CD14-positive monocyte (primary cell): ENCODE measurements at regions of chr2 and their contacts with region 1.

Region 1: GRCh38 chr2:222805541-222806304 is 55.1 kb upstream of the ACSL3 start:
- DNase-seq: peak; percentile 70 to 87 (median 79)
- H3K4me3 ChIP-seq: peak overlapping the region in 1 of 3 experiments; percentile 41
- H3K4me3 Mint-ChIP-seq: peak overlapping the region in 1 of 2 donors; percentile 67
- H3K27ac ChIP-seq: peak overlapping the region; percentile 73 to 92
- H3K27ac Mint-ChIP-seq: peak overlapping the region; percentile 95 to 99 (median 98)
- H3K4me1 ChIP-seq: peaks cover 24% of the 10 kb centered on the region in 2 donors
- H3K4me1 Mint-ChIP-seq: peaks cover 27% of the 10 kb centered on the region
- H3K27me3 ChIP-seq: no peaks in the 10 kb centered on the region
- H3K27me3 Mint-ChIP-seq: no peaks in the 10 kb centered on the region
- CTCF ChIP-seq: no peak

Region 2: GRCh38 chr2:222465746-222466145 is 340.0 kb before region 1 on chr2:
- intact Hi-C with region 1: no loop called
- DNase-seq: peak in 1 of 3 donors; percentile 30
- H3K4me3 ChIP-seq: no peak overlapping the region
- H3K4me3 Mint-ChIP-seq: no peak overlapping the region
- H3K27ac ChIP-seq: no peak overlapping the region
- H3K27ac Mint-ChIP-seq: peak overlapping the region in 2 of 7 donors; percentile 5
- H3K4me1 ChIP-seq: no peaks in the 10 kb centered on the region
- H3K4me1 Mint-ChIP-seq: peaks cover 4% of the 10 kb centered on the region
- H3K27me3 ChIP-seq: no peaks in the 10 kb centered on the region
- H3K27me3 Mint-ChIP-seq: peaks cover 8 to 25% (median 17%) of the 10 kb centered on the region in 3 donors
- CTCF ChIP-seq: no peak

Region 3: GRCh38 chr2:222844323-222844722 is 38.6 kb after region 1 on chr2:
- intact Hi-C with region 1: loop called (anchors 5 kb)
- DNase-seq: peak; percentile 85 to 95 (median 93)
- H3K4me3 ChIP-seq: peak overlapping the region; percentile 25 to 71 (median 37)
- H3K4me3 Mint-ChIP-seq: peak overlapping the region; percentile 52 to 80
- H3K27ac ChIP-seq: peak overlapping the region; percentile 60 to 92
- H3K27ac Mint-ChIP-seq: peak overlapping the region; percentile 95 to 99 (median 98)
- H3K4me1 ChIP-seq: peaks cover 51 to 59% of the 10 kb centered on the region in 2 donors
- H3K4me1 Mint-ChIP-seq: peaks cover 45% of the 10 kb centered on the region
- H3K27me3 ChIP-seq: no peaks in the 10 kb centered on the region
- H3K27me3 Mint-ChIP-seq: peaks cover 1 to 10% (median 3%) of the 10 kb centered on the region in 3 donors
- CTCF ChIP-seq: no peak

Region 4: GRCh38 chr2:222878877-222879603 is 73.3 kb after region 1 on chr2:
- intact Hi-C with region 1: no loop called
- DNase-seq: no peak
- H3K4me3 ChIP-seq: no peak overlapping the region
- H3K4me3 Mint-ChIP-seq: no peak overlapping the region
- H3K27ac ChIP-seq: no peak overlapping the region
- H3K27ac Mint-ChIP-seq: peak overlapping the region in 1 of 7 donors; percentile 52
- H3K4me1 ChIP-seq: no peaks in the 10 kb centered on the region
- H3K4me1 Mint-ChIP-seq: peaks cover 15% of the 10 kb centered on the region
- H3K27me3 ChIP-seq: no peaks in the 10 kb centered on the region
- H3K27me3 Mint-ChIP-seq: peaks cover 0 to 2% (median 1%) of the 10 kb centered on the region in 3 donors
- CTCF ChIP-seq: no peak

Region 5: DNA sequence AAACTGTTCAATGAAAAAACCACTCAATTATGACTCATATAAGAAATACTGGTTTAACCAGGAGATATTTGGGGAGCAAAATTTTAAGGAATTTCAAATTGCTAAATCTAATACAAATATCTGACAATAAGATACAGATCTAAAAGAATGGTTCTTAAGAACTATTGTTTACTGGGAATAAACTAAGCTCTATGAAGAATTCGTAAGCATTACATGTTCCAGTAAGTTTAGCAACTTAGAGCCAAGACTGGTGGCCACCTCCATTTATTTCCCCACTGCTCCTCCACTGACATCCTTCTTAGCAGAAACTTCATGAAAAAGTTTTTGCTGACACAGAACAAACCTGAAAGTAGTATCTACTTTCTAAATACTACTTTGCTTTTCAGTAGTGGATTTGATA is 138.1 kb after region 1 on chr2:
- intact Hi-C with region 1: no loop called
- DNase-seq: no peak
- H3K4me3 ChIP-seq: no peak overlapping the region
- H3K4me3 Mint-ChIP-seq: no peak overlapping the region
- H3K27ac ChIP-seq: no peak overlapping the region
- H3K27ac Mint-ChIP-seq: no peak overlapping the region
- H3K4me1 ChIP-seq: no peaks in the 10 kb centered on the region
- H3K4me1 Mint-ChIP-seq: no peaks in the 10 kb centered on the region
- H3K27me3 ChIP-seq: no peaks in the 10 kb centered on the region
- H3K27me3 Mint-ChIP-seq: peaks cover 0 to 10% (median 3%) of the 10 kb centered on the region in 3 donors
- CTCF ChIP-seq: no peak